H1 (cell line): ENCODE measurements at regions of chr6 and their contacts with region 1.

Region 1: DNA sequence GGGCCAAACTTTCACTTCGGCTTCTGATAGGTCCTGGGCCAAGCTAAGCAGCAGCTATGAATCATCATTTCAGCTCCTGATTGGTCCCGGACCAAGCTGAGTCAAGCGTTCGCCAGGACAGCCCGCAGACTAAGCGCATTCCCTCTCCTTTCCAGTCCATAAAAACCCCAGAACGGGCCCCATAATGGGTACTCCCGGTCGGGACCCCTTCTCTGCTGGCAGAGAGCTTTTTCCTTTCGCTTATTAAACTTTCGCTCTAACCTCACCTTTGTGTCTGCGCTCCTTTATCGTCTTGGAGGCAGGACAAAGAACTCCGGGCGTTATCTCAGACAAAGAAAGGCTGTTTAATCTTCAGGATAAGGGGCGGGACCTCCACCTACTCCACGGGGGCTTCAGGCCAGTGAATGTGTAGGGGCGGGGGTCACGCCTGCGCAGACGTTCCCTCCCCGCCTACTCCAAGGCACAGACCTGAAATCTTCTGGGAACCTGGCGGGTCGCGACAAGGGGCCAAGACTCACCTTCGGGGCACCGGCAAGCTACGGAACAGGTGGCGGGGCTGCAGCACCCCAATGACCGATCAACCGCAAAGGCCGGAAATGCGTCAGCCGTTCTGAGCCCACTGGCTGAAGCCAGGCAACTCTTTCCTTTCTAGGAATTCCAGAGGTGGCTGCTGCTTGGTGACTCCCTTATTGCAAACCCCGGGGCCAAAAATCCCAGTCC is at the start of gene ZSCAN31:
- DNase-seq: peak; percentile 89 to 95
- H3K4me3 ChIP-seq: peak within 1 kb of the TSS; percentile 86 to 95 (median 91)
- H3K27ac ChIP-seq: peak within 1 kb of the TSS; percentile 95
- H3K4me1 ChIP-seq: no peaks in the 10 kb centered on the region
- H3K27me3 ChIP-seq: no peaks in the 10 kb centered on the region
- CTCF ChIP-seq: no peak
- EP300 ChIP-seq: no peak; a peak in 1 of 3 replicates
- POLR2A ChIP-seq: peak; percentile 86 to 99
- RAD21 ChIP-seq: no peak
- total RNA-seq, gene ZSCAN31: 7.0 and 8.8 TPM in 2 replicates

Region 2: DNA sequence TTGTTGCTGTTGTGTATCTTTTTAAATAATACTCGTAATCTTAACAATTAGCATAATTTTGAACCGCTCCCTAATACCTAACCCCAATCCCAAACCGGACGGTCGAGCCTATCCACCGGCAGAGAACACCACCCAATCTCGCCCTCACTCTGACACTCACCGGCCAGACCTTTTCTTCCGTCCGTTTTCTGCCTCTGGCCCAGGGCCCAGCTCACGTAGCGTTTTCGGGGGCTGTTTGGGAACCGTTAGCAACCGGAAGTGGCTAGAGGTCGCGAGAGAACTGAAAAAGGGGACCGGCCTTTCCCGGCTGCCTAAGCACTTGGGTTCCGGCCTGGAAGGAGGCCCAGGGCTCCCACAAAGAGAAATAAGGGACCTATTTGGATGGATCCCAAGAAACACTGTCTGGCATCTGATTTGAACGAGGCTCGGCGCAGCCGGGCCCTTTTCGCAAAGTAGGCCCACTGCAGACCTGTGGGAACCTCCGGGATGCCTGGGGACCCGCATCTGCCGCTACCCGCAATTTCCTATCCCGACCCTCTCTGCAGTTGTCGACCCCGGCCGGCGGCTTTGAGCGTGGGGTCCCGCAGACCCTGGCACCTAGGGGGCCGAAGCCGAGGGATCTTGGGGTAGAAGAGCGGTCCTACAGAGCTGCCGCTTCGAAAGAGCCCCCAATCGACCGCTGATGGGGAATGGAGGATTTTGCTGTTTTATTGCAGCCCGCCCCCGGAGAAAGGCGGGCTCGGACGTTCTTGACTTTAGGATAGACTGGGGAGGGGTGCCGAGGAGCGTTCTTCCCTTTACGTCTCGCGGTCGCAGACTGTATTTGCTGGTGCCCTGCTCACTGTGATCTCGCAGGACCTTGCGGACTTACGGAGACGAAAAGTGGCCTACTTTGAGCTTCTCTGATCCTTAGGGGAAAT is 198.9 kb before region 1 on chr6:
- CTCF ChIA-PET with region 1: no interaction called
- POLR2A ChIA-PET with region 1: interaction called, 10 read pairs
- DNase-seq: peak; percentile 60 to 87
- H3K4me3 ChIP-seq: peak overlapping the region; percentile 85 to 91 (median 87)
- H3K27ac ChIP-seq: peak overlapping the region; percentile 54
- H3K4me1 ChIP-seq: peaks cover 0 to 8% (median 2%) of the 10 kb centered on the region in 4 experiments; a peak in 3 of 7 replicates
- H3K27me3 ChIP-seq: peaks cover 0 to 3% (median 1%) of the 10 kb centered on the region in 4 experiments; a peak in 1 of 7 replicates
- CTCF ChIP-seq: no peak
- EP300 ChIP-seq: peak in 1 of 2 experiments; percentile 49; a peak in 1 of 3 replicates
- POLR2A ChIP-seq: peak; percentile 62 to 67
- RAD21 ChIP-seq: peak; percentile 22 to 23; a peak in 2 of 4 replicates

Region 3: DNA sequence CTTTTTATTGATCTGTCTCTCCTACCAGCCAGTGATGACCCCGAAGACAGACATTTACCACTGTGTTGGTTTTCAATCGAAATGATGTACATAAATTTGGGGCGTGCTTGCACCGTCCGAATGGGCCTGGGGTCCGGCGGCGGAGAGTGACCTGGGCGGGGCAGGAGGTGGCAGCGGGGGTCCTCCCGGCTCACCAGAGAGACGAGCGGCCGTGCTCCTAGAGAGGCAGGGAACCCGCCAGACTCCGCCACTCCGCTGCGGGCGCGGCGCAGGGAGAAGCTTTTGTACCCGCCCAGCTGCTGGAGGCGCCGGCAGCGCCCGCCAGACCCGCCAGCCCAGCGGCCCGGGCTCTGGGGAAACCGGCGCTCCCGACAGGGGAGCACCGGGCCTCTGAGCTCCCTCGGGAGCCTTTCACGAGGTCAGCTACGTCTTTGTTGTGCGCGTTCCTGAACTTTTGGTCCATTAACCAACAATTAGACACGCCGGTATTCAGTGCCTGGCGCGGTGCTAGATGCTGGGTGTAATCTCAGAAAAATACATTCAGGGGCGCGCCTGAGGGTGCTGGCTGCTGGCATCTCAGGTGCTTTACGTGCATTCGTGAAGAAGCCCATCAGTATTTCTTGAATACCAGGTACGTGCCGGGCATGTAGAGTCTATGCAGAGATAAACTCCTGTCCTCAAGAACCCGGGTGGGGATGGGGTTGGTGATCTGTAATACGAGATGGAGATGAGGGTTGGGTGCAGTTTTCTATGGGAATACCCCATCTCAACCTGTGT is 54.2 kb before region 1 on chr6 and contains the start of gene PGBD1:
- CTCF ChIA-PET with region 1: interaction called, 4 read pairs
- POLR2A ChIA-PET with region 1: interaction called, 16 read pairs
- DNase-seq: peak; percentile 50 to 92
- H3K4me3 ChIP-seq: peak within 1 kb of the TSS; percentile 61 to 95 (median 82)
- H3K27ac ChIP-seq: no peak within 1 kb of the TSS
- H3K4me1 ChIP-seq: peaks cover 0 to 2% (median 0%) of the 10 kb centered on the region in 4 experiments; a peak in 2 of 7 replicates
- H3K27me3 ChIP-seq: no peaks in the 10 kb centered on the region
- CTCF ChIP-seq: no peak
- EP300 ChIP-seq: no peak
- POLR2A ChIP-seq: peak; percentile 60 to 83
- RAD21 ChIP-seq: peak; percentile 9 to 18; a peak in 1 of 4 replicates
- total RNA-seq, gene PGBD1: 7.6 and 9.2 TPM in 2 replicates

Region 4: DNA sequence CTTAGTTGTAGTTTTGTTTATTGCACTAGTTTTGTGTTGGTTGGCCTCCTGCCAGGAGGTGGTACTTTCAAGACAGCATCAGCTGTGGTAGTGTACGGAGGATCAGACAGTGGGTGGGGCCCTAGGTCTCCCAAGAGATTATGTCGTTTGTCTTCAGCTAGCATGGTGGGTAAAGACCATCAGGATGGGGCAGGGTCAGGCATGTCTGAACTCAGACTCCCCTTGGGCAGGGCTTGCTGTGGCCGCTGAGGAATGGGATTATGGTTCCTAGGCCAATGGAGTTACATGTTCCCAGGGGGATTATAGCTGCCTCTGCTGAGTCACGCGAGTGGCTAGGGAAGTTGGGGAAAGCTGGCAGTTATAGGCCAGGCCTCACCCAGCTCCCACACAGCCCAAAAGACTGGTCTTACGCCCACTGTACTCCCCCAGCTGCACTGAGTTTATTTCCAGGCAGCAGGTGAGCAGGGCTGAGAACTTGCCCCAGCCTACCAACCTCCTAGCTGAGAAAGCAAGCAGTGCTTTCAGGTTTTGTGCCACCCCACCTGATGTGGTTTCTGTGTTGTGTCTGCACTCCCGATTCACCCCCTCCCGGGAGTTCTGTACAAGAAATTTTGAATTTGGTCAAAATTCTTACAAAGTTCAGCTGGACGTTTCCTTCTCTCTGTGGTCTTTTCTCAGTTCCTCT is 24.4 kb before region 1 on chr6:
- CTCF ChIA-PET with region 1: interaction called, 3 read pairs
- POLR2A ChIA-PET with region 1: interaction called, 17 read pairs
- DNase-seq: no peak
- H3K4me3 ChIP-seq: no peak overlapping the region
- H3K27ac ChIP-seq: no peak overlapping the region
- H3K4me1 ChIP-seq: peaks cover 0 to 1% (median 0%) of the 10 kb centered on the region in 4 experiments; a peak in 4 of 7 replicates
- H3K27me3 ChIP-seq: no peaks in the 10 kb centered on the region
- CTCF ChIP-seq: no peak
- EP300 ChIP-seq: no peak
- POLR2A ChIP-seq: no peak
- RAD21 ChIP-seq: no peak

Region 5: GRCh38 chr6:28349892-28350737 is 14.4 kb after region 1 on chr6 and contains the start of gene ZKSCAN3:
- CTCF ChIA-PET with region 1: interaction called, 10 read pairs
- POLR2A ChIA-PET with region 1: interaction called, 36 read pairs
- DNase-seq: peak; percentile 46 to 86
- H3K4me3 ChIP-seq: peak within 1 kb of the TSS; percentile 93 to 96 (median 94)
- H3K27ac ChIP-seq: peak within 1 kb of the TSS; percentile 80
- H3K4me1 ChIP-seq: peaks cover 0 to 2% (median 0%) of the 10 kb centered on the region in 4 experiments; a peak in 1 of 7 replicates
- H3K27me3 ChIP-seq: 0 out of 7 replicates have a peak, but pooled peaks cover 0 to 1% (median 0%) of the 10 kb centered on the region in 4 experiments
- CTCF ChIP-seq: no peak
- EP300 ChIP-seq: no peak
- POLR2A ChIP-seq: peak; percentile 11 to 60; a peak in 2 of 3 replicates
- RAD21 ChIP-seq: no peak
- total RNA-seq, gene ZKSCAN3: 9.2 and 9.8 TPM in 2 replicates

Region 6: GRCh38 chr6:28383235-28384142 is 47.8 kb after region 1 on chr6:
- CTCF ChIA-PET with region 1: interaction called, 8 read pairs
- POLR2A ChIA-PET with region 1: interaction called, 12 read pairs
- DNase-seq: peak; percentile 87 to 94
- H3K4me3 ChIP-seq: peak overlapping the region; percentile 52 to 68 (median 61)
- H3K27ac ChIP-seq: peak overlapping the region; percentile 41; the same call in 1 of the 2 replicates
- H3K4me1 ChIP-seq: peaks cover 0 to 3% (median 1%) of the 10 kb centered on the region in 4 experiments; a peak in 3 of 7 replicates
- H3K27me3 ChIP-seq: no peaks in the 10 kb centered on the region
- CTCF ChIP-seq: peak; percentile 33 to 61 (median 46)
- EP300 ChIP-seq: no peak; a peak in 1 of 3 replicates
- POLR2A ChIP-seq: peak; percentile 76 to 83
- RAD21 ChIP-seq: peak; percentile 53; a peak in 3 of 4 replicates

Region 7: GRCh38 chr6:28443112-28443773 is 107.5 kb after region 1 on chr6 and contains the start of gene ZSCAN23:
- CTCF ChIA-PET with region 1: no interaction called
- POLR2A ChIA-PET with region 1: no interaction called
- DNase-seq: peak; percentile 58 to 86
- H3K4me3 ChIP-seq: peak within 1 kb of the TSS; percentile 88 to 91 (median 90)
- H3K27ac ChIP-seq: peak within 1 kb of the TSS; percentile 94
- H3K4me1 ChIP-seq: no peaks in the 10 kb centered on the region
- H3K27me3 ChIP-seq: no peaks in the 10 kb centered on the region
- CTCF ChIP-seq: peak in 1 of 3 experiments; percentile 4; a peak in 1 of 4 replicates
- EP300 ChIP-seq: no peak
- POLR2A ChIP-seq: peak; percentile 95 to 97
- RAD21 ChIP-seq: no peak
- total RNA-seq, gene ZSCAN23: 4.2 and 5.3 TPM in 2 replicates